ENCODE measurements at regions of chr15 and their contacts with region 1.

Region 1: DNA sequence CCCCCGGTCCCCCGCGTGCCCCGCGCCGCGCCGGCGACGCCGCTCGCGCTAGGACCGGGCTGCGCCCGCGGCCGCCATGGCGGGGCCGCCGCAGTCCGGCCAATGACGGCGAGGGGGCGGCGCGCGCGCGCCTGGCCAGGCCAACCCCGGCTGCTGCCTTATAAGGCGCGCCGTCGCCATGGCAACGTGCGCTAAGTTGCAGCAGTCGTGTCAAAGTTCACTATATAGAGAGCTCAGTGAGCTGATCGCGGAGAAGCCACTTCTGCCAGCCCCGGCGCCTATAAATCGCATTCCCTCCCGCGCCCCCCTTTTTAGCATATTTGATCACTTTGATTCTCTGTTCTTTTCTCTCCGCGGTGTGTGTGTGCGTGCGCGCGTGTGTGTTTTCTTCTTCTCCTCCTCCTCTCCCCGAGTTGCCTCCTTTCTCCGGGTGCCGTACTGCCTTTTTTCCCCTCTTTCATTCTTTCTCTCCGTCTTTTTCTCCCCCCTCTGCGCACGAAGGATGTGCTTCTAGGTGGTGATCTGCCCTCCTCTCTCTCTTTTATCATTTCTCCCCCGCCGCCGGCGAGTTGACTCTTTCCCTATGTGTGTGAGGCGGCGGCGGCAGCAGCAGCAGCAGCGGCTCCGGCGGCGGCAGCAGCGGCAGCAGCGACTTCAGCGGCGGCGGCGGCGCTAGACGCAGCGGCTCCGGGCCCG is at the start of gene NR2F2:
- DNase-seq: peak; percentile 98
- H3K4me3 Mint-ChIP-seq: no peak within 1 kb of the TSS
- H3K27ac Mint-ChIP-seq: peak within 1 kb of the TSS; percentile 98
- H3K4me1 Mint-ChIP-seq: peaks cover 22% of the 10 kb centered on the region
- H3K27me3 Mint-ChIP-seq: no peaks in the 10 kb centered on the region
- CTCF ChIP-seq: no peak
- total RNA-seq, gene NR2F2: 158 and 167 TPM in 2 replicates

Region 2: DNA sequence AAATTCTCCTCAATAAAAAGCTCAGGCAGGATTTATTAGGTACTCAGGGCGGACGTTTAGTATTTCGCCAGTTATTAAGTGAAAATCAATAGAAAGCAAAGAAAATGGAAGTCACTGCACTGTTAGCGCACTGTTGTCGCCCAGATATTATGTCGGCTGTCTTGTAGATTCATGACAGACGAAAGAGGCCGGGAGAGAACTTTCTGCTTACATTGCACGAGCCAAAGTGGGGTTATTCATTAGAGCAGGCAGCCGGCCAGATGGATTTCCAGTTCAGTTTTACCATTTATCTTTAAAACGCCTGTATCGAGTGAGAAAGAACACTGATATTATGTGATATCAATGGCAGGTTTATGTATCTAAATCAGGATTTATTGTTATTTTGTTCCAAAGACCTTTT is 866.1 kb before region 1 on chr15:
- CTCF ChIA-PET with region 1: no interaction called
- intact Hi-C with region 1: loop called (anchors 10 kb)
- DNase-seq: peak; percentile 3
- H3K4me3 Mint-ChIP-seq: peak overlapping the region; percentile 23
- H3K27ac Mint-ChIP-seq: no peak overlapping the region
- H3K4me1 Mint-ChIP-seq: no peaks in the 10 kb centered on the region
- H3K27me3 Mint-ChIP-seq: no peaks in the 10 kb centered on the region
- CTCF ChIP-seq: no peak

Region 3: GRCh38 chr15:95922431-95922830 is 408.2 kb before region 1 on chr15:
- CTCF ChIA-PET with region 1: interaction called, 7 read pairs
- intact Hi-C with region 1: loop called (anchors 1 kb)
- DNase-seq: peak; percentile 34
- H3K4me3 Mint-ChIP-seq: no peak overlapping the region
- H3K27ac Mint-ChIP-seq: no peak overlapping the region
- H3K4me1 Mint-ChIP-seq: no peaks in the 10 kb centered on the region
- H3K27me3 Mint-ChIP-seq: no peaks in the 10 kb centered on the region
- CTCF ChIP-seq: peak; percentile 25

Region 4: GRCh38 chr15:96273317-96274086 is 57.1 kb before region 1 on chr15:
- CTCF ChIA-PET with region 1: interaction called, 12 read pairs
- intact Hi-C with region 1: no loop called
- DNase-seq: peak; percentile 80
- H3K4me3 Mint-ChIP-seq: peak overlapping the region; percentile 48
- H3K27ac Mint-ChIP-seq: peak overlapping the region; percentile 81
- H3K4me1 Mint-ChIP-seq: peaks cover 86% of the 10 kb centered on the region
- H3K27me3 Mint-ChIP-seq: no peaks in the 10 kb centered on the region
- CTCF ChIP-seq: no peak

Region 5: DNA sequence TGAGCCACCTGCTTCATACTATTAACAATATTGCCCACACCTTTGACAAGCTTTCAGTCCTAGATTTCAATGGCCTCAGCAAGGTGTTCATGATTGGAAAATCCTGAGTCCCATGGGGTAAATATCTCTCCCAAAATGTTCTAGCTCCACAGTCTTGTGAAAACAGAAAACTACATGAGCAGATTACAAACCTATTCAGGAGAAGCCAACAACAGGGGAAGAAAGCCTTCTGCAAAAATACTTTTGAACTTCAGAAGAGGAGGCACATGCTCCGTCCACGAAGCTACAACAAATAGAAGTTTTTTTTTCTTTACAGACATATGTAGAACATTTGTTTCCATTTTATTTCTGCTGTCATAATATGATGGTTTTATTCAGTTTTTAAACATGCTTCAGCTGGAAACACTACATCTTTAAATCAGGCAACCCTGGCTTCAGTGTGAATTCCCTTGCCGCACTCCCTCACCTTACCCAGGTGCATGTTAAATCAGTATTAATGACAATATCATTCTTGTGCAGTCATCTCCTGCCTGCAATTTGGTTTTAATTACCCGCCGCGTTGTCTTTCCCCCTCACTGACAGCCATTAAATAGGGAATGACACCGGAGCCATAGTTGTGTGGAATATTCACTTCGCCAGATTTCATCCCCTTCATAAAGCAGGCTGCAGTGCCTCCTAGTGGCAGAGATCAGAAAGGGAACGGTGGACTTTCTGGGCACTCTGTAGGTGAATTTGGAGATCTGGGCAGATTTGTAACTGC is 904.4 kb after region 1 on chr15:
- CTCF ChIA-PET with region 1: interaction called, 5 read pairs
- intact Hi-C with region 1: loop called (anchors 1 kb)
- DNase-seq: peak; percentile 76
- H3K4me3 Mint-ChIP-seq: peak overlapping the region; percentile 31
- H3K27ac Mint-ChIP-seq: peak overlapping the region; percentile 60
- H3K4me1 Mint-ChIP-seq: peaks cover 26% of the 10 kb centered on the region
- H3K27me3 Mint-ChIP-seq: no peaks in the 10 kb centered on the region
- CTCF ChIP-seq: peak; percentile 95

Measured in Calu3 (cell line).